Activated CD4-positive, alpha-beta T cell treated with anti-CD3 and anti-CD28 coated beads, Interleukin-2, amount 10 ng/mL, durations not matched to agents 24 days and 14 days (primary cell): ENCODE measurements at regions of chr5 and their contacts with region 1.

Region 1: DNA sequence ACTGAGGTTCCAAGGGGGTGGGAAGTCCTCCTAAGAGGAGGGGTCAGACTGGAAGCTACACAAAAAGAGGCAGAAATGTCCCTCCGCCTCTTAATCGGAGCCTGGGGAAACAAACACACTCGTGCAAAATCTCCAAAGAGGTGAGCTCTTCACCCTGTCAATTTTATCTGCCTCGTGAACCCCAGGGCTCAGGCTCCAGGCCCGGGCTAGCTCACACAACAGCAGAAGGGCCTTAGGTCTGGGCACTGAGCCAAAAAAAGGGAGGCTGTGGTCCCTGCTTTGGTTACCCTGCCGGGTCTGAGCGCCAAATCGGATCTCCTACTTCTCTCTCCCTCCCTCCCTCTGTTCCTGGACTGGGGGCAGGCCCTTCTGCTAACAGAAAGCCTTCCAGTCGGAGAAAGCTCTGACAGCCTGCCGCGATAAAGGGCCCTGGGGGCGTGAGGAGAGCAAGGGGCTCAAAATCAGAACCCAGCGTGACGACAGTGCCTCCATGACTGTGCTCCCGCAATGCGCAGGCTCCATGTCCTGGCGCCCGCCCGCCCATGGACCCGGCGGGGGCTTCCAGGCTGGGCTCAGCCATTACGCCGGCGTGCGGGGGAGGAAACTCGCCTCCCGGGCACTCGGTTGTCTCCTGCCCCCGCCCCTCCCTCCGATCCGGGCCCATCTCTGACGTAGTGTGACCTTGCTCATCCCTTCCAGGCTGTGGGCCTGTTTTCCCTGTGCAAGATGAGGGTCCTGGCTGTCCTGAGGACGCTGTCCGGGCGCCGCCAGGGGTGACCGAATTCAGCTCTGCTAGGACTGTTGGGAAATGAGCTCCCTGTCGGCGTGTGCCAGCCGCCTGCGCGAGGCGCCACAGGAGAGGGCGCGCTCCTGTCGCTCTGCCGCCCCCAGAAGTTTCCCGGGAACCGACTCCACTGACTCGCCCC is 865 bp upstream of the SLC22A4 start:
- DNase-seq: peak; percentile 88
- H3K4me3 Mint-ChIP-seq: peak overlapping the region; percentile 96
- H3K27ac Mint-ChIP-seq: peak overlapping the region; percentile 94
- H3K4me1 Mint-ChIP-seq: peaks cover 29% of the 10 kb centered on the region
- H3K27me3 Mint-ChIP-seq: peaks cover 4% of the 10 kb centered on the region

Region 2: DNA sequence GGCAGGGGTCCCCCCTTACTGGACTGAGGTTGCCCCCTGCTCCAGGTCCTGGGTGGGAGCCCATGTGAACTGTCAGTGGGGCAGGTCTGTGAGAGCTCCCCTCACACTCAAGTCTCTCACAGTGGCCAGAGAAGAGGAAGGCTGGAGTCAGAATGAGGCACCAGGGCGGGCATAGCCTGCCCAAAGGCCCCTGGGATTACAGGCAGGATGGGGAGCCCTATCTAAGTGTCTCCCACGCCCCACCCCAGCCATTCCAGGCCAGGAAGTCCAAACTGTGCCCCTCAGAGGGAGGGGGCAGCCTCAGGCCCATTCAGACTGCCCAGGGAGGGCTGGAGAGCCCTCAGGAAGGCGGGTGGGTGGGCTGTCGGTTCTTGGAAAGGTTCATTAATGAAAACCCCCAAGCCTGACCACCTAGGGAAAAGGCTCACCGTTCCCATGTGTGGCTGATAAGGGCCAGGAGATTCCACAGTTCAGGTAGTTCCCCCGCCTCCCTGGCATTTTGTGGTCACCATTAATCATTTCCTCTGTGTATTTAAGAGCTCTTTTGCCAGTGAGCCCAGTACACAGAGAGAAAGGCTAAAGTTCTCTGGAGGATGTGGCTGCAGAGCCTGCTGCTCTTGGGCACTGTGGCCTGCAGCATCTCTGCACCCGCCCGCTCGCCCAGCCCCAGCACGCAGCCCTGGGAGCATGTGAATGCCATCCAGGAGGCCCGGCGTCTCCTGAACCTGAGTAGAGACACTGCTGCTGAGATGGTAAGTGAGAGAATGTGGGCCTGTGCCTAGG is 219.9 kb before region 1 on chr5 and contains the start of gene CSF2:
- intact Hi-C with region 1: loop called (anchors 5 kb)
- DNase-seq: no peak
- H3K4me3 Mint-ChIP-seq: peak within 1 kb of the TSS; percentile 80
- H3K27ac Mint-ChIP-seq: peak within 1 kb of the TSS; percentile 92
- H3K4me1 Mint-ChIP-seq: peaks cover 81% of the 10 kb centered on the region
- H3K27me3 Mint-ChIP-seq: no peaks in the 10 kb centered on the region
- total RNA-seq, gene CSF2: 1,084 and 1,122 TPM in 2 replicates

Region 3: DNA sequence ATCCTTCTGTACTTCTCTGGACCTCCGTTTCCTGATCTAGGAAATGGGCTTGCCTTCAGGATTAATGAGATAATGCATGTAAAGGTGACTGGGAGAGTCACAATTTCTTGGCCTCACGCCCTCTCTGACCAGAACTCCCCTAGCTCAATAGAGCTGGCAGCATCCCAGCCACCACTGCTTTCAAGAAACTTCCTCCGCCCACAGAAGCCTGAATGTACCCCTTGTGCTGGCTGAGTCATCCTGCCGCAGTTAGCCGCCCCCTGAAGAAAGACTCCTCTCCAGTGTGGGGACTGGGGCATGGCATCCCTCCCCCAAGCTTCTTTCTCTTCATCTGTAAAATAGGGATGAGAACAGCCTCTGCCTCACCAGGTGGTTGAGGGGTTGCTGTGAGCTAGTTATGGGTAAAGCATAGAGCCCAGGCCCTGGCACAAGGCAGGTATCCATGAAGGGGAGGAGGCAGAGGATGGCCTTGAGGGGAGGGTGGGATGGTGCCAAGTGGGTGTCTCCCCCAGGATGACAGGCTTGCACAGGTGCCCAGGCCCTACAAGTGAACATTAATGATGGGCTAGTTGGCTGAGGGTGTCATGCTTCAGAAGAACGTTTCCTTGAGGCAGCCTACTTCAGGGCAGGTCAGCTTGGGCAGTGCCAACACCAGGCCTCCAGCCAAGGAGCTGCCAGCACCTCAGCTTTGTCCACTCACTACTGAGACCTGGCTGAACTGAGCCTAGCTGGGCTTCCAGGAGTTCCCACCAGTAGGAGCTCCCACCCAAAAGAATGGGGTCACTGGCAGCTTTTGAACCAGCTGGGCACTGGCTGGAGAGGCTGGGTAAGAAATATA is 32.4 kb before region 1 on chr5:
- intact Hi-C with region 1: loop called (anchors 2 kb)
- DNase-seq: no peak
- H3K4me3 Mint-ChIP-seq: peak overlapping the region; percentile 42
- H3K27ac Mint-ChIP-seq: peak overlapping the region; percentile 30
- H3K4me1 Mint-ChIP-seq: peaks cover 44% of the 10 kb centered on the region
- H3K27me3 Mint-ChIP-seq: peaks cover 15% of the 10 kb centered on the region

Region 4: GRCh38 chr5:132495667-132496190 is 202.4 kb after region 1 on chr5:
- intact Hi-C with region 1: loop called (anchors 5 kb)
- DNase-seq: peak; percentile 94
- H3K4me3 Mint-ChIP-seq: peak overlapping the region; percentile 89
- H3K27ac Mint-ChIP-seq: peak overlapping the region; percentile 97
- H3K4me1 Mint-ChIP-seq: peaks cover 75% of the 10 kb centered on the region
- H3K27me3 Mint-ChIP-seq: no peaks in the 10 kb centered on the region

Region 5: DNA sequence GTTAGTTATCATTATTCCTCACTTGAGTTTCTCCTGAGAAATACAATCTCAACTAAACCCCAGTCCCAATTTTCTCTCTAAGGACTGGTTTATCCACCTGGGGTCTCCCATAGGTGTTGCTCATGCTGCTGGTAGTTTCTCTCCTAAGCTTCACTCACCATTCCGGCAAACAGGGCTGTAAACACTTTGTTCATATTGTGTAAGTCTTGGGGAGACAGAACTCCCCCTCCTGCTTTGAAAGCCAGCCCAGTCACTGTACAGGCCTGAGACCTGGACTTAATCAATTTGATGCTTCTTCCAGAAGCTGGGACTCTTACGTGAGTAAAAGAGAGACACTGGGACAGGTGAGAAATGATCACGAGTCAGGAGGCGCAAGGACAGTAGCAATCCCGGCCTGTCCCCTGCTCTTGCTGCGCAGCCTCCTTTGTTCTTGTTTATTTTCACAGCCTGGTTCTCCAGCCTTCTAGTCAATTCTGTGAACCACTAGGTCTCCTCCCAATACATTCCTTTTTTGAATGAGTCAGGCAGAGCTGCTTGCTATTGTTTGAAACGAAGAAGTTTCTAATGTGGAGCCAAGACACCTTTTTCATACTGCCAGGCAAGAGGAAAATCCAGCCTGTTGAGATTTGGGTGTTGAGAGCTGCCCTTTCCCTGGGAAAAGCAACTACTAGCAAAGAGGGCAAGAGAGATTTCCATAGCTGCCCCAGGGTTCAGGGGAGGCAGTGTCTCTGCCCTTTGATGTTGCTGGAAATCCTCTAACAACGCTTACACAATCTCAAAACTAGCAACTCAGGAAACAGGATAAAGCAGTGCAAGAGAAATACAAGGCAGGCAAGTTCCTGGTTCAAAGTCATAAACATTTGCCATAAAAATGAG is 546.3 kb after region 1 on chr5:
- intact Hi-C with region 1: no loop called
- DNase-seq: no peak
- H3K4me3 Mint-ChIP-seq: no peak overlapping the region
- H3K27ac Mint-ChIP-seq: no peak overlapping the region
- H3K4me1 Mint-ChIP-seq: no peaks in the 10 kb centered on the region
- H3K27me3 Mint-ChIP-seq: peaks cover 5% of the 10 kb centered on the region